ENCODE measurements at regions of chr3 and their contacts with region 1.

Region 1: GRCh38 chr3:35401671-35402070 is 237.7 kb upstream of the ARPP21 start:
- DNase-seq: no peak
- ATAC-seq: no peak
- H3K4me3 ChIP-seq: no peak overlapping the region
- H3K27ac ChIP-seq: no peak overlapping the region
- H3K4me1 ChIP-seq: no peaks in the 10 kb centered on the region
- H3K27me3 ChIP-seq: no peaks in the 10 kb centered on the region
- CTCF ChIP-seq: no peak
- POLR2A ChIP-seq: no peak

Region 2: GRCh38 chr3:35389907-35390306 is 11.8 kb before region 1 on chr3:
- intact Hi-C with region 1: loop called in 1 of 10 experiments (anchors 2 kb)
- DNase-seq: no peak
- ATAC-seq: no peak
- H3K4me3 ChIP-seq: no peak overlapping the region
- H3K27ac ChIP-seq: no peak overlapping the region
- H3K4me1 ChIP-seq: no peaks in the 10 kb centered on the region
- H3K27me3 ChIP-seq: no peaks in the 10 kb centered on the region
- CTCF ChIP-seq: no peak
- POLR2A ChIP-seq: no peak

Region 3: DNA sequence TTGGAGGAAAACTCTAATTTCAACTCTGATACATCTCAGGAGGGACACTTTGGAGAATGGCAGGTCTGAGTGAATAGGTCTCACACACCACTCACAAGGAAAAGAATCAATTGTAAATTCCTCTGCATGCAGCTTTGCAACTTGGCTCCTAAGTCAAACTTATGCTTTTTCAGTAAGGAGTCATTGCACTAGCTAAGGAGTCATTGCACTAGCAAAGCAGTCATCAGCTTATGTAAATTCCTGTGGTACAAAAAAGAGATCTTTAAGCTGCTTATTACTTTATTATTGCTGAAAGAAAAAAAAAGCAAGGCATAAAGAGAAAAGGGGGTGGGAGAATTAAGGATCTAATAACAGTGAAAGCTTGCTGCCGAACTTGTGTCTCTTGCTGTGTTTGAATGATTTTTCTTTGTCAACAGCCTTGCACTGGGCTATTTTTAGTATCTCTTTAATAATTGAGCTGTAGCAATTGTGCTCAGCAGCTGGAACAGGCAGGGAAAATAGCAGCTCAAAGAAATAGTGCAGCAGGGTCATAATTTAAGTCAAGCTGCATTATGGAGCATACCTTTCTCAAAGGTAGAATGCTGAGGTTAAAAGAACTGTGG is 83.4 kb after region 1 on chr3:
- intact Hi-C with region 1: no loop called
- DNase-seq: no peak
- ATAC-seq: no peak
- H3K4me3 ChIP-seq: no peak overlapping the region
- H3K27ac ChIP-seq: no peak overlapping the region
- H3K4me1 ChIP-seq: no peaks in the 10 kb centered on the region
- H3K27me3 ChIP-seq: no peaks in the 10 kb centered on the region
- CTCF ChIP-seq: no peak
- POLR2A ChIP-seq: no peak

Region 4: GRCh38 chr3:35707904-35708303 is 306.2 kb after region 1 on chr3:
- intact Hi-C with region 1: no loop called
- DNase-seq: no peak
- ATAC-seq: no peak
- H3K4me3 ChIP-seq: no peak overlapping the region
- H3K27ac ChIP-seq: no peak overlapping the region
- H3K4me1 ChIP-seq: no peaks in the 10 kb centered on the region
- H3K27me3 ChIP-seq: no peaks in the 10 kb centered on the region
- CTCF ChIP-seq: no peak
- POLR2A ChIP-seq: no peak

Region 5: GRCh38 chr3:35744419-35744818 is 342.7 kb after region 1 on chr3:
- intact Hi-C with region 1: no loop called
- DNase-seq: no peak
- ATAC-seq: peak in 1 of 4 donors; percentile 36
- H3K4me3 ChIP-seq: no peak overlapping the region
- H3K27ac ChIP-seq: no peak overlapping the region
- H3K4me1 ChIP-seq: peaks cover 0 to 3% (median 0%) of the 10 kb centered on the region in 12 donors
- H3K27me3 ChIP-seq: peaks cover 0 to 20% (median 0%) of the 10 kb centered on the region in 9 donors
- CTCF ChIP-seq: no peak
- POLR2A ChIP-seq: no peak

Measured in heart left ventricle (tissue), 16 donors.